Activated T-helper 1 cell treated with anti-CD3 and anti-CD28 coated beads, Interleukin-12 subunit alpha, Interleukin-12 subunit beta, Interleukin-2, Interleukin-4 antibody, amounts not matched to agents 30 ng/mL and 10 ng/mL and 1 ng/mL, durations not matched to agents 14 hours and 24 hours and 36 hours (primary cell): ENCODE measurements at regions of chr7 and their contacts with region 1.

Region 1: DNA sequence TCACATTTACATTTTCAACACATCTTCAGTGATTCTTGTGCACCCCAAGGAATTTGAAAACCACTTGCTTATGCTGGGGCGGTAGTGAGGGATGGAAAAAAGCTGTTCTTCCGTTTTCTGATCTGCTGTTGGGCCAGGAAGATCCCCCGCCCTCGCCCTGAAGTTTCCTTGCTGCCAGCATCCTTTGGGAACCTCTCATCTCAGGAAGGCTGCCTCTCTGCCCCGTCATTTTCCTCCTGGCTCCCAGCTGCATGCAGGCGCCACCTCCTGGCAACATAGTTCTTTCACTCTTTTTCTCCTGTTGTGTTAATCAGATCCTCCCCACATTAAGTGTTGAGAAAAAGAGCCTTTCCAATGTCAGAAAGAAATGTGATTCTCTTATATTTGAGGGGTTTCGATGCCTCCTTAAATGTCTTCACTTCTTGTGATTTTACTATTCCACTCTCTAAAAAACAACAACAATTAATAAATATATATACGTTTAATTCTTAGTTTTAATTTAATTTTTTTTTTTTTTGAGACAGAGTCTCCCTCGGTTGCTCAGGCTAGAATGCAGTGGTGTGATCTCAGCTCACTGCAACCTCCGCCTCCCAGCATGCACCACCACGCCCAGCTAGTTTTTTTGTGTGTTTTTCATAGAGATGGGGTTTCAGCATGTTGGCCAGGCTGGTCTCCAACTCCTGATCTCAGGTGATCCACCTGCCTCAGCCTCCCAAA is 122.9 kb downstream of the RALA start:
- DNase-seq: peak; percentile 26
- H3K4me3 Mint-ChIP-seq: no peak overlapping the region
- H3K27ac Mint-ChIP-seq: peak overlapping the region; percentile 69
- H3K4me1 Mint-ChIP-seq: peaks cover 20% of the 10 kb centered on the region
- H3K27me3 Mint-ChIP-seq: no peaks in the 10 kb centered on the region

Region 2: GRCh38 chr7:39465055-39465929 is 281.0 kb before region 1 on chr7:
- intact Hi-C with region 1: no loop called
- DNase-seq: peak; percentile 8
- H3K4me3 Mint-ChIP-seq: no peak overlapping the region
- H3K27ac Mint-ChIP-seq: no peak overlapping the region
- H3K4me1 Mint-ChIP-seq: peaks cover 18% of the 10 kb centered on the region
- H3K27me3 Mint-ChIP-seq: peaks cover 20% of the 10 kb centered on the region

Region 3: GRCh38 chr7:39580149-39580874 is 165.9 kb before region 1 on chr7:
- intact Hi-C with region 1: loop called (anchors 1 kb)
- DNase-seq: peak; percentile 63
- H3K4me3 Mint-ChIP-seq: no peak overlapping the region
- H3K27ac Mint-ChIP-seq: peak overlapping the region; percentile 64
- H3K4me1 Mint-ChIP-seq: peaks cover 10% of the 10 kb centered on the region
- H3K27me3 Mint-ChIP-seq: no peaks in the 10 kb centered on the region

Region 4: DNA sequence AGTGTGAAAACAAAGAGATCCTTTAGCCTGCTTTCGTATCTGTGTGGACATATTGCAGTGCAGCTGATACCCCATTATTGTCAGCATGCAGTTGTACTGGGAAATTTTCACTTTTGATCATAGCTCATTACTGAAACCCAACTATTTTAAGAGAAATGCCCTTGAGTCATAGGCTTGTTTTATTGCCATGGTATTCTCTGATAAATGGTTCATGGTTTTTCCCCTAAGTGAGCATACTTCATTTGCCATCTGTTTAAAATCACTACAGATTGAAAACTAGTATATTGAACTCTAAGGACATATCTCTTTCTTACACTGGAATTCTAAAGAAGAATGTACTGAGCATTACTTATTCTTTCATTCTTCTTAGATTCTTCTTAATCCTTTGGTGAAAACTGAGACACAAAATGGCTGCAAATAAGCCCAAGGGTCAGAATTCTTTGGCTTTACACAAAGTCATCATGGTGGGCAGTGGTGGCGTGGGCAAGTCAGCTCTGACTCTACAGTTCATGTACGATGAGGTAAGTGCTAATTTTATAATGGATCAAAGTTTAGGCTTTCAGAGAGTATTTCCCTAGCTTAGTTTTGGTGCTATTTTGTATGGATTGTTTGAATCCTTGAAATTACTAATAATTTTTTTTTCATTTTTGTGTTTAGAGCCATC is 59.9 kb before region 1 on chr7:
- intact Hi-C with region 1: no loop called
- DNase-seq: no peak
- H3K4me3 Mint-ChIP-seq: no peak overlapping the region
- H3K27ac Mint-ChIP-seq: no peak overlapping the region
- H3K4me1 Mint-ChIP-seq: peaks cover 19% of the 10 kb centered on the region
- H3K27me3 Mint-ChIP-seq: no peaks in the 10 kb centered on the region

Region 5: GRCh38 chr7:39732837-39733804 is 13.1 kb before region 1 on chr7:
- intact Hi-C with region 1: loop called (anchors 1 kb)
- DNase-seq: peak; percentile 97
- H3K4me3 Mint-ChIP-seq: peak overlapping the region; percentile 86
- H3K27ac Mint-ChIP-seq: peak overlapping the region; percentile 95
- H3K4me1 Mint-ChIP-seq: peaks cover 46% of the 10 kb centered on the region
- H3K27me3 Mint-ChIP-seq: peaks cover 6% of the 10 kb centered on the region

Region 6: DNA sequence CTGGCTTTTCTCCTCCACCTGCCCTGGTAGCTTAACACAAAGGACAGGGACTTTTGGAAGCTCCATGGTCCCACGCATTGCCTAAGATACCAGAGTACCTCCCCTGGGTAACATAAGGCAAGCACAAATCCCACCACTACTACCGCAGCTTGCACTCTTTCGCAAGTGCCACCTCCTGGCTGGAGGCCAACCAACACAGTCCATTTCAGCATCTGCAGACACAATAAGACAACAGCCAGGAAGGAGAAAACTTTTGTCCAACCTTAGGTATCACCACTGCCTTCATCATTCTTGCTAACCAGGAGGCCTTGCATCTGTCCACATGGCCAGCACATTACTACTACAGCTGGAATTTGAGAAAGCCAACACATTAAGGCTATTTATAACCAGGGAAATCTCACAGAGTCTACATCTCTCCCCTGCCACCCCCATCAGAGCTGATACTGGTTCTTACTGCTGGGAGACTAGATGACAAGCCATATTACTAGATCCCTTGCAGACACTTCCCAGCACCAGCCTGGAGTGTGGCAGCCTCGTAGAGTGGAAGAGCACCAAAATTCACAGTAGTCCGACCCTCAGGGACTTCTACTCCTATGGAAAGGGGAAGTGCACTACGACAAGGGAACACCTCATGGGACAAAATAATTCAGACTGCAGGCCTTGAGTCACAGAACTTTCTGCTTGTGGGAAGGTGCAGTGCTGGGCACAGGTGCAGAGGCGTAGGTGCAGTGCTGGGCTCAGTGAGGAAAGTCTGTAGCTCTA is 164.0 kb after region 1 on chr7:
- intact Hi-C with region 1: no loop called
- DNase-seq: no peak
- H3K4me3 Mint-ChIP-seq: no peak overlapping the region
- H3K27ac Mint-ChIP-seq: no peak overlapping the region
- H3K4me1 Mint-ChIP-seq: peaks cover 5% of the 10 kb centered on the region
- H3K27me3 Mint-ChIP-seq: peaks cover 6% of the 10 kb centered on the region

Region 7: DNA sequence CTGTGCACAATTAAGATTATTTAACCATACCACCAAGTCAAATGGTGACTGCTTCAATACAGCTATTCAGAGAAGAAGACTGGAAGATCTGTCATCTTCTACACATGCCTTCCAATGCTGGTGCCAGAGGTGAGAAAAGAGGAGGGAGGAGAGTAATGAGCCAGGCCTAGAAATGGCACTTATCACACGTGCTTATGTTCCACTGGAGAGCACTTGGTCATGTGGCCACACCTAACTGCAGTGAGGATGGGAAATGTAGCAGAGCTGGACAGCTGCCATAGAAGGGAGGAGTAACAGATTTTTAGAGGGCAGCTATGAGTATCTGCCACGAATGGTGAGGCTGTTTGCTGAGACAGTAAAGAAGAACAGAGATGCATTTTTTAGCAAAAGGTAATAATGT is 311.0 kb after region 1 on chr7:
- intact Hi-C with region 1: loop called (anchors 5 kb)
- DNase-seq: no peak
- H3K4me3 Mint-ChIP-seq: no peak overlapping the region
- H3K27ac Mint-ChIP-seq: no peak overlapping the region
- H3K4me1 Mint-ChIP-seq: peaks cover 4% of the 10 kb centered on the region
- H3K27me3 Mint-ChIP-seq: no peaks in the 10 kb centered on the region